CD8-positive, alpha-beta memory T cell (primary cell): ENCODE measurements at regions of chr19 and their contacts with region 1.

Region 1: GRCh38 chr19:45770192-45771101 is 1.4 kb upstream of the SIX5 start:
- DNase-seq: peak; percentile 87 to 92 (median 90)
- H3K4me3 ChIP-seq: peak overlapping the region; percentile 84
- H3K4me3 Mint-ChIP-seq: peak overlapping the region; percentile 85 to 96 (median 87)
- H3K27ac ChIP-seq: peak overlapping the region; percentile 75
- H3K27ac Mint-ChIP-seq: peak overlapping the region; percentile 74 to 100 (median 94)
- H3K4me1 ChIP-seq: no peaks in the 10 kb centered on the region
- H3K4me1 Mint-ChIP-seq: peaks cover 7 to 29% (median 12%) of the 10 kb centered on the region in 3 donors
- H3K27me3 ChIP-seq: no peaks in the 10 kb centered on the region
- H3K27me3 Mint-ChIP-seq: peaks cover 2 to 4% of the 10 kb centered on the region in 2 donors

Region 2: DNA sequence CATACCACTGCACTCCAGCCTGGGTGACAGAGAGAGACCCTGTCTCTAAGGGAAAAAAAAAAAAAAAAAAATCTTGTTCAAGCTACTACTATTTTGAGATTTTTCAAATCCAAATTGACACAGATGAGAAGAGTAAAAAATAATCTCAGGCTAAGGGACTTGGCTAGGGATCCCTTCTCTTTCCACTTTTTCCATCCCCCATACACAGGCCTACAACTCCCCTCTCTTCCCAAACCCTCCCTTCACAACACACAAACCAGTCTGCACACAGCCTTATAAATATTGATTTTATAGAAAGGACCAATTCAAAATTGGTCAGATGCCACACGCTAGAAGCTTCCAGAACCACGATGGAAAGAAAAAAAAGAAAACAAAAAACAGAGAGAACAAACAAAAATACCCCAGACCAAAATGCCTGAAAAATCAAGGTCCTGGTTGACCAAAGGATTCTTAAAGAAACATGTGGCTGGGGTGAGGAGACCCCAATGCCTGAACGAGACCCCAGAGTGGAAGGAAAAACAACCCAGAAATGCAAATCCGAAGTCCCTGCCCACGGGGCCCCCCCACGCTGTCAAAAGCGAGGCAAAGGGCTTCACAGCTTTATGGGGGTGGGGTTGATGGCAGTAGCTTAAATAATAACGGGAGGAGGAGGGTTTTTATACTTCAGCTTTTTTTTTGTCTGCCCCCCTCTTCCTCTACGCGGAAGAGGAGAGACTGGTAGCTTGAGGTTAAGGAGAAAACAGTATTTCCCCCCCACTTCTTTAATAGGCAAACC is 59.9 kb before region 1 on chr19:
- CTCF ChIA-PET with region 1: no interaction called
- POLR2A ChIA-PET with region 1: no interaction called
- DNase-seq: no peak
- H3K4me3 ChIP-seq: no peak overlapping the region
- H3K4me3 Mint-ChIP-seq: peak overlapping the region in 1 of 7 donors; percentile 17
- H3K27ac ChIP-seq: no peak overlapping the region
- H3K27ac Mint-ChIP-seq: peak overlapping the region in 5 of 8 donors; percentile 43 to 76 (median 58)
- H3K4me1 ChIP-seq: peaks cover 6% of the 10 kb centered on the region
- H3K4me1 Mint-ChIP-seq: peaks cover 13 to 22% (median 16%) of the 10 kb centered on the region in 3 donors
- H3K27me3 ChIP-seq: no peaks in the 10 kb centered on the region
- H3K27me3 Mint-ChIP-seq: no peaks in the 10 kb centered on the region

Region 3: DNA sequence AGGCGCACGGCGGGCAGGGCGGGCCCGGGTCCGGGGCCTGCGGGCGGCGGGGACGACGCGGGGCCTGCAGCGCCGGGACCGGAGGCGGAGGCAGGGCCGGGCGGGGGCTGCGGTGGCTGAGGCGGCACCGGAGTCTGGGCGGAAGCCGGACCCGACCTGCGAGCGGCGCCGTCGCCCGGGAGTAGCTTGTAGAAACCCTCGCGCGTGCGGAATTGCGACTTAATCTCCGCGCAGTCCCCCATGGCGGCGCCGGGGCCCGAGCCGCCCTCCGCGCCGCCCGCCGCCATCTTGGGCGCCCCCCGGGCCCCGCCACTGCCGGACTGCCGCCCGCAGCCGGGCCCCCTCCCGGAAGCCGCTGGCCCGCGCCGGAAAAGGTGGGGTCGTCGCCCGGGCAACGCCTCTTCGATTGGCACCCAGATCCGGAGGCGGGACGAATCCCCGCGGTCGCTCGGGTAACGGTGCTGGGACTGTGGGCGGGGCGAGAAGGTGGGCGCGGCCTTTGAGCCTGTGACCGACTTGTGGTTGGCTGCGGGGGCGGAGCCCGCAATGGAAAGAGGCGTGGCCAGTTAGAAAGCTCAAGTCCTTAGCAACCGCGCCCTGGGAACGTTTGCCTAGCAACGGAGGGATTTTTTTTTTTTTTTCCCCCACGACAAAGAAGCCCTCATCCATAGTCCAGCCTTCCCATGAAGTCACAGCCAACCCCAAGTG is 22.2 kb after region 1 on chr19 and contains the start of gene DMWD:
- CTCF ChIA-PET with region 1: interaction called, 182 read pairs
- POLR2A ChIA-PET with region 1: interaction called, 20 read pairs
- DNase-seq: peak; percentile 98 to 100 (median 100)
- H3K4me3 ChIP-seq: peak within 1 kb of the TSS; percentile 68
- H3K4me3 Mint-ChIP-seq: peak within 1 kb of the TSS; percentile 82 to 96 (median 89)
- H3K27ac ChIP-seq: peak within 1 kb of the TSS; percentile 61
- H3K27ac Mint-ChIP-seq: peak within 1 kb of the TSS; percentile 39 to 97 (median 92)
- H3K4me1 ChIP-seq: peaks cover 30% of the 10 kb centered on the region
- H3K4me1 Mint-ChIP-seq: peaks cover 41 to 52% (median 45%) of the 10 kb centered on the region in 3 donors
- H3K27me3 ChIP-seq: peaks cover 11% of the 10 kb centered on the region
- H3K27me3 Mint-ChIP-seq: peaks cover 0 to 23% of the 10 kb centered on the region in 2 donors
- total RNA-seq, gene DMWD: 57.6 to 62.9 TPM

Region 4: GRCh38 chr19:45798995-45799517 is 28.6 kb after region 1 on chr19:
- CTCF ChIA-PET with region 1: interaction called, 182 read pairs
- POLR2A ChIA-PET with region 1: interaction called, 36 read pairs
- DNase-seq: peak; percentile 48 to 73 (median 57)
- H3K4me3 ChIP-seq: no peak overlapping the region
- H3K4me3 Mint-ChIP-seq: peak overlapping the region in 1 of 7 donors; percentile 17
- H3K27ac ChIP-seq: no peak overlapping the region
- H3K27ac Mint-ChIP-seq: peak overlapping the region in 2 of 8 donors; percentile 24 to 25
- H3K4me1 ChIP-seq: peaks cover 7% of the 10 kb centered on the region
- H3K4me1 Mint-ChIP-seq: peaks cover 7 to 11% (median 9%) of the 10 kb centered on the region in 3 donors
- H3K27me3 ChIP-seq: peaks cover 11% of the 10 kb centered on the region
- H3K27me3 Mint-ChIP-seq: peaks cover 12 to 20% of the 10 kb centered on the region in 2 donors

Region 5: GRCh38 chr19:45817010-45817724 is 46.7 kb after region 1 on chr19:
- CTCF ChIA-PET with region 1: interaction called, 19 read pairs
- POLR2A ChIA-PET with region 1: interaction called, 3 read pairs
- DNase-seq: peak; percentile 89 to 96 (median 92)
- H3K4me3 ChIP-seq: no peak overlapping the region
- H3K4me3 Mint-ChIP-seq: peak overlapping the region in 2 of 7 donors; percentile 3 to 12
- H3K27ac ChIP-seq: peak overlapping the region; percentile 24
- H3K27ac Mint-ChIP-seq: peak overlapping the region in 6 of 8 donors; percentile 21 to 81 (median 44)
- H3K4me1 ChIP-seq: peaks cover 4% of the 10 kb centered on the region
- H3K4me1 Mint-ChIP-seq: peaks cover 3 to 5% (median 3%) of the 10 kb centered on the region in 3 donors
- H3K27me3 ChIP-seq: no peaks in the 10 kb centered on the region
- H3K27me3 Mint-ChIP-seq: peaks cover 0 to 2% of the 10 kb centered on the region in 2 donors

Region 6: DNA sequence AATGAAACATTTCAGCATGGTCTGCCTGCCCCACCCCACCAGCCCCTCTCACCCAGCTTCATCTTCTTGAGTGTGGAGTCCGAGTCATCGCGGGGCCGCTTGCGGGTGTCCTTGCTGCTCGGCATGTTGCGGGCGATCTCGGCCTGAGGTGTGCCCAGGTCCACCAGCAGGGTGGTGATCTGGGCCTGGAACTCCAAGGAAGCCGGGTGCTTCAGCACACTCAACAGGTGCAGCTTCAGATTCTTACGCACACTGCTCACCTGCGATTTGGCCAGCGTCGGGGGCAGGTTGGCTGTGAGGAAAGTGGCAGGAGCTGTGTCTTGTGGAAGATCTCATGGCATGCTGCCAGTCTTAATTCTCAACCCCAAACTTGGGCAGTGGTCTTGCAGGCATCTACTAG is 71.8 kb after region 1 on chr19:
- CTCF ChIA-PET with region 1: no interaction called
- POLR2A ChIA-PET with region 1: no interaction called
- DNase-seq: no peak
- H3K4me3 ChIP-seq: no peak overlapping the region
- H3K4me3 Mint-ChIP-seq: no peak overlapping the region
- H3K27ac ChIP-seq: no peak overlapping the region
- H3K27ac Mint-ChIP-seq: no peak overlapping the region
- H3K4me1 ChIP-seq: no peaks in the 10 kb centered on the region
- H3K4me1 Mint-ChIP-seq: peaks cover 4 to 7% (median 7%) of the 10 kb centered on the region in 3 donors
- H3K27me3 ChIP-seq: no peaks in the 10 kb centered on the region
- H3K27me3 Mint-ChIP-seq: no peaks in the 10 kb centered on the region

Region 7: GRCh38 chr19:45862564-45863334 is 92.3 kb after region 1 on chr19 and contains the start of gene SYMPK:
- CTCF ChIA-PET with region 1: interaction called, 11 read pairs
- POLR2A ChIA-PET with region 1: interaction called, 8 read pairs
- DNase-seq: peak; percentile 98 to 99 (median 98)
- H3K4me3 ChIP-seq: peak within 1 kb of the TSS; percentile 88
- H3K4me3 Mint-ChIP-seq: peak within 1 kb of the TSS; percentile 88 to 96 (median 92)
- H3K27ac ChIP-seq: peak within 1 kb of the TSS; percentile 82
- H3K27ac Mint-ChIP-seq: peak within 1 kb of the TSS; percentile 84 to 99 (median 93)
- H3K4me1 ChIP-seq: peaks cover 16% of the 10 kb centered on the region
- H3K4me1 Mint-ChIP-seq: peaks cover 27 to 41% (median 28%) of the 10 kb centered on the region in 3 donors
- H3K27me3 ChIP-seq: peaks cover 4% of the 10 kb centered on the region
- H3K27me3 Mint-ChIP-seq: peaks cover 12 to 18% of the 10 kb centered on the region in 2 donors
- total RNA-seq, gene SYMPK: 116 to 119 TPM